ENCODE measurements at regions of chr7 and their contacts with region 1.

Region 1: GRCh38 chr7:7761340-7761980 is 43.1 kb upstream of the RPA3 start:
- DNase-seq: peak; percentile 50
- H3K4me3 ChIP-seq: peak overlapping the region in 1 of 3 experiments; percentile 56
- H3K27ac ChIP-seq: peak overlapping the region; percentile 54
- H3K4me1 ChIP-seq: peaks cover 24% of the 10 kb centered on the region
- H3K27me3 ChIP-seq: no peaks in the 10 kb centered on the region
- CTCF ChIP-seq: peak in 1 of 2 donors; percentile 47

Region 2: GRCh38 chr7:7424151-7424873 is 337.1 kb before region 1 on chr7:
- CTCF ChIA-PET with region 1: no interaction called
- dilution Hi-C with region 1: no loop called
- in situ Hi-C with region 1: no loop called
- intact Hi-C with region 1: loop called (anchors 5 kb)
- DNase-seq: peak; percentile 51
- H3K4me3 ChIP-seq: peak overlapping the region; percentile 32 to 51 (median 45)
- H3K27ac ChIP-seq: no peak overlapping the region
- H3K4me1 ChIP-seq: no peaks in the 10 kb centered on the region
- H3K27me3 ChIP-seq: no peaks in the 10 kb centered on the region
- CTCF ChIP-seq: peak; percentile 88

Region 3: GRCh38 chr7:7595451-7595850 is 166.0 kb before region 1 on chr7:
- CTCF ChIA-PET with region 1: interaction called, 4 read pairs
- dilution Hi-C with region 1: no loop called
- in situ Hi-C with region 1: loop called in 1 of 2 experiments (anchors 25 kb)
- intact Hi-C with region 1: loop called (anchors 1 kb)
- DNase-seq: peak; percentile 11
- H3K4me3 ChIP-seq: no peak overlapping the region
- H3K27ac ChIP-seq: no peak overlapping the region
- H3K4me1 ChIP-seq: no peaks in the 10 kb centered on the region
- H3K27me3 ChIP-seq: no peaks in the 10 kb centered on the region
- CTCF ChIP-seq: peak; percentile 10 to 35

Region 4: GRCh38 chr7:7681179-7681935 is 80.1 kb before region 1 on chr7:
- CTCF ChIA-PET with region 1: interaction called, 3 read pairs
- dilution Hi-C with region 1: no loop called
- in situ Hi-C with region 1: loop called (anchors 5 to 10 kb)
- intact Hi-C with region 1: loop called (anchors 1 kb)
- DNase-seq: peak; percentile 66
- H3K4me3 ChIP-seq: no peak overlapping the region
- H3K27ac ChIP-seq: no peak overlapping the region
- H3K4me1 ChIP-seq: peaks cover 5% of the 10 kb centered on the region
- H3K27me3 ChIP-seq: no peaks in the 10 kb centered on the region
- CTCF ChIP-seq: peak; percentile 60 to 61

Region 5: GRCh38 chr7:7968543-7969305 is 207.3 kb after region 1 on chr7 and contains the start of gene GLCCI1:
- CTCF ChIA-PET with region 1: no interaction called
- dilution Hi-C with region 1: no loop called
- in situ Hi-C with region 1: no loop called
- intact Hi-C with region 1: loop called (anchors 2 kb)
- DNase-seq: peak; percentile 97
- H3K4me3 ChIP-seq: peak within 1 kb of the TSS; percentile 61 to 98 (median 69)
- H3K27ac ChIP-seq: peak within 1 kb of the TSS; percentile 58
- H3K4me1 ChIP-seq: peaks cover 2% of the 10 kb centered on the region
- H3K27me3 ChIP-seq: no peaks in the 10 kb centered on the region
- CTCF ChIP-seq: no peak
- total RNA-seq, gene GLCCI1: 7.0 to 14.6 TPM

Region 6: GRCh38 chr7:8092140-8092539 is 330.7 kb after region 1 on chr7:
- CTCF ChIA-PET with region 1: no interaction called
- dilution Hi-C with region 1: no loop called
- in situ Hi-C with region 1: no loop called
- intact Hi-C with region 1: loop called (anchors 2 kb)
- DNase-seq: peak; percentile 27
- H3K4me3 ChIP-seq: no peak overlapping the region
- H3K27ac ChIP-seq: no peak overlapping the region
- H3K4me1 ChIP-seq: peaks cover 6% of the 10 kb centered on the region
- H3K27me3 ChIP-seq: no peaks in the 10 kb centered on the region
- CTCF ChIP-seq: no peak

Region 7: GRCh38 chr7:8217200-8218068 is 456.0 kb after region 1 on chr7:
- CTCF ChIA-PET with region 1: no interaction called
- dilution Hi-C with region 1: no loop called
- in situ Hi-C with region 1: no loop called
- intact Hi-C with region 1: loop called (anchors 2 kb)
- DNase-seq: peak; percentile 36
- H3K4me3 ChIP-seq: no peak overlapping the region
- H3K27ac ChIP-seq: no peak overlapping the region
- H3K4me1 ChIP-seq: no peaks in the 10 kb centered on the region
- H3K27me3 ChIP-seq: no peaks in the 10 kb centered on the region
- CTCF ChIP-seq: peak; percentile 53

Measured in mammary epithelial cell (primary cell).